Activated T-helper 1 cell treated with anti-CD3 and anti-CD28 coated beads, Interleukin-12 subunit alpha, Interleukin-12 subunit beta, Interleukin-2, Interleukin-4 antibody, amounts not matched to agents 30 ng/mL and 10 ng/mL and 1 ng/mL, durations not matched to agents 14 hours and 24 hours and 36 hours (primary cell): ENCODE measurements at regions of chr2 and their contacts with region 1.

Region 1: GRCh38 chr2:191677646-191678436 is at the start of gene NABP1:
- DNase-seq: peak; percentile 98
- H3K4me3 Mint-ChIP-seq: peak within 1 kb of the TSS; percentile 94
- H3K27ac Mint-ChIP-seq: peak within 1 kb of the TSS; percentile 98
- H3K4me1 Mint-ChIP-seq: peaks cover 63% of the 10 kb centered on the region
- H3K27me3 Mint-ChIP-seq: no peaks in the 10 kb centered on the region
- total RNA-seq, gene NABP1: 51.0 and 58.4 TPM in 2 replicates

Region 2: DNA sequence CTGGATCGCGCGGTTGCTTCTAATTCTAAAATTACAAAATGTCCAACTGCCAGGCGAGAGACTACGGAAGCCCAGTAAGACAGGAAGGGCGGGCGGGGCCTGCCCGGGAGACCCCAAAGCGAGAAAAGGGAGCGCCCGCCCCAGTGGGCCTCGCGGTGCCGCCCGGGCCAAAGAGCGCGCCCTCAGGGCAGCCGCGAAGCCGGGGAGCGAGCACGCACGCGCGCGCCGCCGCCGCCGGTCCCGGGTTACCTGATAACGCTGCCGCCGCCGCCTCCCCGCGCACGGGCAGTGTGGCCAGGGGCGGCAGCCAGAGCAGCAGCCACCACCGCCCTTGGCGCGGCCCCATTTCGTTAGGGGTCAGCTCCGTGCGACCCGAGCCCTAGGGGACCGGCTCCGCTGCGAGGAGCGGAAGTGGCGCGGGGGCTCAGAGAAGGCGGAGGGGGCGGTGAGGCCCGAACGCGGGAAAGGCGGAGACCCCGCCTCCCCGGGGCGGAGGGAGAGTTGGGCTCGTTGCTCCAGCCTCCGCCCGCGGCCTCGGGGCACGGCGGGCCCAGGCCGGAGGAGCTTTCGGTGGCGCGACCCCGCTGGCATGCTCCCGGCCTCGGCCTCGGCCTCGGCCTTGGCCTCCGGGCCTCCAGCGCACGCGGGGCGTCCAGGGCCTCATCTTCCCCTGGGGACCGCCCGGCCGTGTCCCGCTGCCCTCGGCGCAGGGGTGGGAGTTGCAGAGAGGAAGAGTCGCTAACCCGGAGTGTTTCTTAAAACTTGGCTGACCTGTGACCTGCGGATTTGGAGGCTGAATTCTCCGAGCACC is 1143.3 kb before region 1 on chr2 and contains the start of gene NEMP2:
- intact Hi-C with region 1: loop called (anchors 5 kb)
- DNase-seq: peak; percentile 82
- H3K4me3 Mint-ChIP-seq: peak within 1 kb of the TSS; percentile 95
- H3K27ac Mint-ChIP-seq: peak within 1 kb of the TSS; percentile 99
- H3K4me1 Mint-ChIP-seq: peaks cover 57% of the 10 kb centered on the region
- H3K27me3 Mint-ChIP-seq: no peaks in the 10 kb centered on the region
- total RNA-seq, gene NEMP2: 11.7 and 13.6 TPM in 2 replicates

Region 3: DNA sequence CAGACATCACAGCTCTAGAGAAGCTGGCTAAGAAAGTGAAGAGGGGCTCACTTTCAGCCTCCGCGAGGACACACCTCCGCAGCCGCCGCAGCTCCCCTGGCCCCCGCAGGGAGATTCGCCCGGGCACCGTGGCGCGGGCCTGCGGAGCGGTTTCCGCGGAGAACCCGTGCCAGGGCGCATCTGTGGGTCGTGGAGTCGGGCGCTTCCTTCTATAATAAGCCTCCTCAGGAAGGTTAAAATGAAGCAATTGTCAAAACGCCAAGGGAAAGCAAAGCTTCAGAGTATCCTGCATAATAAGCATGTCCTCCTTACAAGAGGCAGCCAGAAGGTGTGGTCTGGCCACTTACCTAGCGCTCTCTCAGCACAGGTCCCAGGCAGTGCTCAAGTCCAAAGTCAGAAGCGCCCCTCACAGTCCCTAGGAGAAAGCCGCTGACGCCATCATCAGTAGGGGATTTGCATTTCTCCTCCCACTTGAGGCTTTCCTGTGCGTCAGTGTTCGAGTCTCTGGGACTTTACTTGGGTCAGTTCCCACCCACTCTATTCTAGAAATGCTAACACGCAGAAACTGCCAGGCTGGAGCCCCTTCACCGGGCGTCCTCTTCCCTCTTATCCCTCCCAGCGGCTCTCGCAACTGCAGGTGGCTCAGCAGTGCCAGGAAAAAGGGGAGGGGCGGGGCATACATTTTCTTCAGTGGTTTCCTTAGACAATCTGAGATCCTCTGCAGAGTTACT is 527.1 kb before region 1 on chr2 and contains the start of gene STAT4:
- intact Hi-C with region 1: loop called (anchors 2 kb)
- DNase-seq: peak; percentile 78
- H3K4me3 Mint-ChIP-seq: peak within 1 kb of the TSS; percentile 95
- H3K27ac Mint-ChIP-seq: peak within 1 kb of the TSS; percentile 95
- H3K4me1 Mint-ChIP-seq: peaks cover 85% of the 10 kb centered on the region
- H3K27me3 Mint-ChIP-seq: no peaks in the 10 kb centered on the region
- total RNA-seq, gene STAT4: 57.4 and 62.1 TPM in 2 replicates

Region 4: DNA sequence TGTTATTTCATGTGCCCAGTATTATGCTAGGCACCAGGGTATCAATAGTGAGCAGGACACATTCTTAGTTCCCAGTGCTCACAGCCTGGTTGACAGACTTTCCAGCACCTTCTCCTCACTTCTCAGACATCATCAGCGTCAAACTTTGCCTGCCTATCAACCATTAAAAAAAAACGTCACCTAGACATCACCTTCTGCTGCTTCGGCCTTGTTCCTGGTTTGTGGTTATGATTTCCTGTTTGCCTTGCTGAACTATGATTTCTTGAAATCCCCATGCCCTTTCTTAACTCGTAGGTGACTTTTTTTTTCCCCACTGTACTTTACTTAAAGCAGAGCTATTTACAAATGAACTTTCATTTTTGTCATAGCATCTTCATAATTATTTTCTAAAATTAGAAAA is 60.3 kb before region 1 on chr2:
- intact Hi-C with region 1: loop called (anchors 1 kb)
- DNase-seq: peak; percentile 64
- H3K4me3 Mint-ChIP-seq: peak overlapping the region; percentile 20
- H3K27ac Mint-ChIP-seq: peak overlapping the region; percentile 90
- H3K4me1 Mint-ChIP-seq: peaks cover 53% of the 10 kb centered on the region
- H3K27me3 Mint-ChIP-seq: no peaks in the 10 kb centered on the region

Region 5: GRCh38 chr2:191666732-191667131 is 11.1 kb before region 1 on chr2:
- intact Hi-C with region 1: loop called (anchors 1 kb)
- DNase-seq: no peak
- H3K4me3 Mint-ChIP-seq: no peak overlapping the region
- H3K27ac Mint-ChIP-seq: peak overlapping the region; percentile 51
- H3K4me1 Mint-ChIP-seq: peaks cover 26% of the 10 kb centered on the region
- H3K27me3 Mint-ChIP-seq: no peaks in the 10 kb centered on the region